ENCODE measurements at regions of chr20 and their contacts with region 1.

Region 1: GRCh38 chr20:59850018-59850641 is 83.3 kb downstream of the SYCP2 start:
- DNase-seq: no peak
- H3K4me3 Mint-ChIP-seq: no peak overlapping the region
- H3K27ac Mint-ChIP-seq: no peak overlapping the region
- H3K4me1 Mint-ChIP-seq: no peaks in the 10 kb centered on the region
- H3K27me3 Mint-ChIP-seq: no peaks in the 10 kb centered on the region

Region 2: DNA sequence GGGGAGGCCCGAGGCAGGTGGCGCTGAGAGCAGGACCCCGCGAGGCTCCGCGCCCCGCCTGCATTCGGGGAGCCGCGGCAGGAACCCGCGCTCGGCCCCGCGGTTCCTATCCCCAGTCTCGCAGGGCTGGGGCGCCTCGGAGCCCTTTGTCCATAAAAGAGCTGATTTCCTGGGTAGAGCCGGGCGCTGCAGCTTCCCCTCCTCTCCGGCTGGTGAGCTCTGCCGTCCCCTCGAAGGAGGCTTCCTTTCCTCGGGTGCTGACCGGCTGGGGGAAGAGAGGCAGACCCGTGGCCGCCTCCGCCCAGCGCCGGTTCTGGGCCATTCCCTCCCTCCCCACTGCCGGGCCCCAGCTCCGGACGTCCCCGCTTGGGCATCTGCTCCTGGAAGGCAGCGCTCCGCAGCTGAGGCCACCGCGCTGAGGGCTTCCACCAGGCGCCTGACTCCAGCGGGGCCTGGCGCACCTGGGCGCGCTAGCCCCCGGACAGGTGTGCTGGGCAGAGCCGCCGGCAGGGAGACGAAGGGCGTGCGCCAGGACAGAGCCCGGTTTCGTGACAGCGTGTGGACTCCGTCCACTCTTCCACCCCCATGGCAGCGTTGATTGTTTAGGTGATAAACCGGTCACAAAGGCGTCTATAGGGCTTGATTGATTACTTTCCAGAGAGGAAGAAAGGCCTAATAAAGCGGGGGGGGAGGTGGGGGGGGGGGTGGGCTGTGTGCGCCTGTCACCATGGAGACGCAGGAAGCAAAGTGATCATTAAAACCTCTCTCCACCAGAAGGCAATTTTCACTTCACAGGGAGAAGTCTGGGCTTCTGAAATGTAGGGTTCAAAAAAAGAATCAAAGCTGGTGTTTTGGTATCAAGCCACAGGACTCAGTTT is 244.7 kb before region 1 on chr20:
- CTCF ChIA-PET with region 1: no interaction called
- POLR2A ChIA-PET with region 1: no interaction called
- intact Hi-C with region 1: loop called (anchors 10 kb)
- DNase-seq: no peak
- H3K4me3 Mint-ChIP-seq: no peak overlapping the region
- H3K27ac Mint-ChIP-seq: no peak overlapping the region
- H3K4me1 Mint-ChIP-seq: no peaks in the 10 kb centered on the region
- H3K27me3 Mint-ChIP-seq: peaks cover 42% of the 10 kb centered on the region

Region 3: DNA sequence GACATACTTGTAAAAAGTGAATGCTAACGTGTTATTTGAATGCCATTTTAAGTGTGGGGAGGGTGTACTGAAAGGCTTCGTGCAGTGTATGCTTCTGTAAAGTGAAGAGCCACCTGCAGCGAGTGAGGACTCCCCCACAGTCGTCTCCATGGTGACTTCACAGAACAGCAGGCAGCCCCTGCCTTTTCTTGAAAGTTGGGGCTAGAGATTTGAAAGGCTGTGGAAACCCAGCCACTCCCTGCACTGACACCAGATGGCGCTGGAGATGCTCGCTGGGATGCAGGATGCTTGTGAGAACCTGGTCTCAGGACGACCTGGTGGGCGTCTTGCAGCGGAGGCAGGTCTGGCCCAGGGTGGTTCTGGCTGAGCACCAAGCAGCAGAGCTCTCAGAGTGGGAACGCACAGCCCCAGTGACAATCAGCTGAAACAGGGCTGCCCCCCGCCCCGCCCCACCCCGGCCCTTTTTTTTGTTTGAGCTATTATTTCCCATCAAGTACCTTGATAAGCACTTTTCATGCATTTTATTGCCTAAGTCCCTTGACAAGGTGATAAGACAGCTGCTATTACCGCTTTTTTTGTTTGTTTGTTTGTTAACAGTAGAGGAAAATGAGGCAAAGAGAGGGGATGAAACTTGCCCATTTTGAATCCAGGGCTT is 67.0 kb before region 1 on chr20:
- CTCF ChIA-PET with region 1: interaction called, 15 read pairs
- POLR2A ChIA-PET with region 1: no interaction called
- intact Hi-C with region 1: no loop called
- DNase-seq: peak; percentile 59
- H3K4me3 Mint-ChIP-seq: no peak overlapping the region
- H3K27ac Mint-ChIP-seq: no peak overlapping the region
- H3K4me1 Mint-ChIP-seq: no peaks in the 10 kb centered on the region
- H3K27me3 Mint-ChIP-seq: peaks cover 7% of the 10 kb centered on the region

Measured in activated CD4-positive, alpha-beta memory T cell treated with anti-CD3 and anti-CD28 coated beads for 36 hours (primary cell).